BJ (cell line): ENCODE measurements at regions of chr5 and their contacts with region 1.

Region 1: GRCh38 chr5:149828161-149828884 is 98.2 kb downstream of the PPARGC1B start:
- DNase-seq: peak; percentile 58
- H3K4me3 ChIP-seq: no peak overlapping the region
- H3K27me3 ChIP-seq: 0 out of 2 replicates have a peak, but pooled peaks cover 1% of the 10 kb centered on the region
- CTCF ChIP-seq: peak; percentile 85

Region 2: GRCh38 chr5:149636851-149637246 is 191.5 kb before region 1 on chr5:
- CTCF ChIA-PET with region 1: interaction called, 363 read pairs
- POLR2A ChIA-PET with region 1: no interaction called
- DNase-seq: no peak
- H3K4me3 ChIP-seq: no peak overlapping the region
- H3K27me3 ChIP-seq: no peaks in the 10 kb centered on the region
- CTCF ChIP-seq: peak; percentile 83

Region 3: DNA sequence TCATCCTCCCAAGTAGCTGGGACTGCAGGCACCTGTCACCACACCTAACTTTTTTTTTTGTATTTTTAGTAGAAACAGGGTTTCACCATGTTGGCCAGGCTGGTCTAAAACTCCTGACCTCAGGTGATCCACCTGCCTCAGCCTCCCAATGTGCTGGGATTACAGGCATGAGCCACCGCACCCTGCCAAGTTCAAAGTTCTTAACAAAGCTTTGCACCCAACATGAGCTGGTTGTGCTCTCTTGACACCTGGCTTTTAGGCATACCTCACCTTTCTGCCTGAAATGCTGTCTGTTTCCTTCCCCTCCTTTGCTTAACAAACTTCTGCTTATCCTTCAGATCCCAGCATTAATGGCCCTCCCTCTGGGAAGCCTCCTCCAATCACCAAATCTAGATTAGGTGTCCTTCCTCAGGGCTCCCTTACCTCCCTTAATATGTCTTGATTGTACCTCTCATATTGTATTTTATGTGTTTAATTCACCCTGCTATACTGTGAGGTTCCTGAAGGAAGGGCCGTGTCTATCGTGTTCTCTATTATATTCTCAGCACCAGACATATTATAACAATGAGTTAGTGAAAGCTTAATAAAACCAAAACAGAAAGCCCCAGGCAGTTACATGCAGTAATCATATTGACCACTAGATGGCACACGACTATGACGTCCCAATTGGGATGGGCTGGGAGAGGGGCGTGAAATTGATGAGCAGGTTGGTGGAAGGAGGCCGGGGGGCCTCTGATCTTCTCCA is 161.1 kb before region 1 on chr5:
- CTCF ChIA-PET with region 1: interaction called, 27 read pairs
- POLR2A ChIA-PET with region 1: no interaction called
- DNase-seq: no peak
- H3K4me3 ChIP-seq: no peak overlapping the region
- H3K27me3 ChIP-seq: peaks cover 2% of the 10 kb centered on the region; the same call in 1 of the 2 replicates
- CTCF ChIP-seq: peak; percentile 76

Region 4: GRCh38 chr5:149735066-149735465 is 93.3 kb before region 1 on chr5:
- CTCF ChIA-PET with region 1: no interaction called
- POLR2A ChIA-PET with region 1: no interaction called
- DNase-seq: no peak
- H3K4me3 ChIP-seq: no peak overlapping the region
- H3K27me3 ChIP-seq: peaks cover 20% of the 10 kb centered on the region
- CTCF ChIP-seq: no peak

Region 5: GRCh38 chr5:149960272-149961185 is 132.2 kb after region 1 on chr5 and contains the start of gene SLC26A2:
- CTCF ChIA-PET with region 1: interaction called, 269 read pairs
- POLR2A ChIA-PET with region 1: no interaction called
- DNase-seq: peak; percentile 86
- H3K4me3 ChIP-seq: peak within 1 kb of the TSS; percentile 78
- H3K27me3 ChIP-seq: no peaks in the 10 kb centered on the region
- CTCF ChIP-seq: 0 out of 2 replicates have a peak, but pooled peaks have one; percentile 10
- polyA plus RNA-seq, gene SLC26A2: 3.3 and 7.6 TPM in 2 replicates

Region 6: GRCh38 chr5:149990518-149991376 is 162.4 kb after region 1 on chr5:
- CTCF ChIA-PET with region 1: interaction called, 286 read pairs
- POLR2A ChIA-PET with region 1: no interaction called
- DNase-seq: no peak
- H3K4me3 ChIP-seq: no peak overlapping the region
- H3K27me3 ChIP-seq: no peaks in the 10 kb centered on the region
- CTCF ChIP-seq: peak; percentile 92

Region 7: DNA sequence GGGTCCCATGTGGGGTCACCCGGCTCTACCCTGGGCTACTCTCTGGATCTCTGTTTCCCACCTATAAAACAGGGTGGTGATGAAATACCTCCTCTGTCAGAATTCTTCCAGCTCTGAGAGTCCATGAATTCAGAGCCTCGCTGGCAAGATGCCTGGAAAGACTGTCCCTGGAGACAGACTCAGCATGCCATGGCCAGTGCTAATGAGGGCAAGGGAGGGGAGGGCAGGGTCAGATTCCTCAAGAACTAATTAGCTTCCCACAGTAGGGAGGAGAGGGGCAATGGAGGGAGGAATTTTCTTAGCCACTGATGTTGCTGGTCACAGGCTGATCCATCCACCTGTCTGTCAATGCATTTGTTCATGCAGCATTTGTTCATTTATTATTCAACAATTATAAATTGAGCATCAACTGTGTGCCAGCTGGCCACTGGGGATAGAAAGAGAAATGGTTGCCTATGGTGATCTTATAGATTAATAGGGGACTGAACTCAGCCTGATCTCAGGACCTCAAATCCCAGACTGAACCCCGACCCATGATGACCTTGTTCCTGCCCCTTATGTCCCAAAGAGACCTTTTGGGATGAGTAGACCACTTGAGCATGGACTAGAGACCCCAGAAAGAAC is 816.9 kb after region 1 on chr5:
- CTCF ChIA-PET with region 1: no interaction called
- POLR2A ChIA-PET with region 1: no interaction called
- DNase-seq: peak; percentile 70
- H3K4me3 ChIP-seq: no peak overlapping the region
- H3K27me3 ChIP-seq: no peaks in the 10 kb centered on the region
- CTCF ChIP-seq: no peak